ENCODE measurements at regions of chr6 and their contacts with region 1.

Region 1: DNA sequence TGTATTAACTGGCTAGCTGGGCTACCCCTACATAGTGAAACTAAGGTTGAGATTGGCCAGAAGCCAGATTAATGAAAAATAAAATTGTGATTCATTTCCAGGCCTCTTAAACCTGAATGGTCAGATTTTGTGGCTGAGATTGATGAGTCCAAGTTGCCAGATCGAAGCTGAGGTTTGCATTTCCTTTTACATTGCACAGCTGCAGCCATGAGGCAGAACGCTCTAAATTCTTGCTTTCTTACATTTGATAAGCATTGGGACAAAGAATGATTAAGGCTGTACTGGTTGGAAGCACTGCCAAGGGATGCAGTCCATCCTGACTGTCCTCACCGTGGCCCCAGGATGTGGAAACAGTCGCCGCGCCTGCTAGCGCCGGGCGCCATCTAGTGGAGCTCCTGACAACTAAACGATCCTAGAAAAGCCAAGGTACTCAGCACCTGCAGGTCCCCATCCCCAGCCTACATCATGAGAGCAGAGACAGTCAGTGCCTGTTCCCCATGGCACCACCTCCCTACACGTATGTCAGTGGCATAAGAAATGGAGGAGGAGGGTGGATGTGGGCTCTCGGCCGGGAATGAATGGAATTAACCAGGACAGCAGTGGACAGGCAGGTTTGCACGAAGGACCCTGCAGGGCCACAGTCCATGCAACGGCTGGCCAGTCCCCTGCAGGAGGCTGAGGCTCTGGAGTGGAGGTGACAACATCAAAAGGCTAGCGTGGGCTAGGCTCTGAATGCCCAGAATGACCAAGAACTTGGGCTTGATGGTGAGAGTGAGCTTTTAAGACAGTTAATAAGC is 19.0 kb downstream of the PXDC1 start:
- DNase-seq: peak; percentile 89
- H3K4me3 ChIP-seq: no peak overlapping the region
- H3K27ac ChIP-seq: no peak overlapping the region
- H3K4me1 ChIP-seq: peaks cover 0 to 34% (median 22%) of the 10 kb centered on the region in 4 donors
- H3K27me3 ChIP-seq: no peaks in the 10 kb centered on the region
- CTCF ChIP-seq: peak; percentile 83 to 89 (median 86)
- EP300 ChIP-seq: no peak
- POLR2A ChIP-seq: no peak

Region 2: DNA sequence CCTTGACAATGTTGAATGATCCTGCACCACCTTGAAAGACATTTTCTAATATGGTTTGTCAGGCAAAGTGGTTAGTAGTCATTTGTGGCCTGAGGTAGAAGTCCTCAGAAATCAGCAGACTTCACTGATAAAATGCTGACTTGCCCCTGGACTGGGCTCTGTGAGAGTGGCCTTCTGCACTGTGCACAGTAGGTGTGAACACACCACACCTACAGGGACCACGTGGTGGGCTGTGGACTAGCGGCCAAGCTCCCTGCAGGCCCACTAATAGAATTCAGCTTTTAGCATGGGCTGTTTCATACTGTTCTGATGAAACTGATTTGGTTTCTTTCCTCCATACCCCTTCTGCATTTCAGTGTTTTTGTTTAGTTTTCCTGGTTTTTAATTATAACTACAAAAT is 606.7 kb before region 1 on chr6:
- intact Hi-C with region 1: loop called (anchors 10 kb)
- DNase-seq: no peak
- H3K4me3 ChIP-seq: no peak overlapping the region
- H3K27ac ChIP-seq: no peak overlapping the region
- H3K4me1 ChIP-seq: no peaks in the 10 kb centered on the region
- H3K27me3 ChIP-seq: no peaks in the 10 kb centered on the region
- CTCF ChIP-seq: no peak
- EP300 ChIP-seq: no peak
- POLR2A ChIP-seq: no peak

Region 3: DNA sequence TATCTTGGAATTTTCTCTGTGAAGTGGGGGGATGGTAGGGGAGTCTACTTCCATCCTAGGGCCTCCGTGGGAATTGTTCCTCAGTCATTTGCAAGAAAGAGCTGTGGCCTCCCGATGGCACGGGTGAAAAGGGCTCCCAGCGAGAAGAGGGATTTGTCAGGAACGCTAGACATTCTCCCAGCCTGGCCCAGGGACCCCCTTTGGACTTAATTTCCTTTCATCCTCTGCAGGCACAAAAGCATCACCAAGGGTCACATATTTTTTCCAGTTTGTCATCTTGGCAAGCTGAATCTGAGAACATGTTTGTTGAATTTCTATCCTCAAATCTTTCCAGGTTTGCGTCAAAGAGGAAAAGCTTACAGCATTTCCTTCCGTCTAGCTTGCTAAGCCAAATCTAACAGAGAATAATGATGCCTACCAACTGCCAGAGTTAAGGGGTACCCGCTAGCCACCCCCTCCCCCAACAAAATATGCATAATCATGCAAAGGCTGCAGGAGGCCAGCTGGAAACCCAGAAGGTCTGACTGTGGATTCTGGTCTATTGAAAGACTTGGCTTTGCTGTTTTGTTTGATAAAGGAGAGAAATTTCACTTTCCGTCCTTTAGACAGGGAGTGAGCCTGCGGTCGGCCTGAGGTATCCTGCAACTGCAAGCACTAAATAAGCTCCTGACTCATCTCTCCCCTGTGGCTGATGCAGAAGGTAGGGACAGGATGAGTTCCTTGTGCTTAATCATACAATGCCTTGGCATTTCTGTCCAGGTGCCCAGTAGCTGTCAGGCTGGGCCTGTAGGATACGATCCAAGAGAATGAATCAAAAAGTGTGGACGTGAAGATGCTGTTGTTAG is 450.7 kb before region 1 on chr6:
- intact Hi-C with region 1: loop called (anchors 1 kb)
- DNase-seq: peak; percentile 66
- H3K4me3 ChIP-seq: no peak overlapping the region
- H3K27ac ChIP-seq: peak overlapping the region; percentile 38 to 75 (median 71)
- H3K4me1 ChIP-seq: peaks cover 0 to 55% (median 40%) of the 10 kb centered on the region in 4 donors
- H3K27me3 ChIP-seq: no peaks in the 10 kb centered on the region
- CTCF ChIP-seq: no peak
- EP300 ChIP-seq: no peak
- POLR2A ChIP-seq: no peak

Region 4: DNA sequence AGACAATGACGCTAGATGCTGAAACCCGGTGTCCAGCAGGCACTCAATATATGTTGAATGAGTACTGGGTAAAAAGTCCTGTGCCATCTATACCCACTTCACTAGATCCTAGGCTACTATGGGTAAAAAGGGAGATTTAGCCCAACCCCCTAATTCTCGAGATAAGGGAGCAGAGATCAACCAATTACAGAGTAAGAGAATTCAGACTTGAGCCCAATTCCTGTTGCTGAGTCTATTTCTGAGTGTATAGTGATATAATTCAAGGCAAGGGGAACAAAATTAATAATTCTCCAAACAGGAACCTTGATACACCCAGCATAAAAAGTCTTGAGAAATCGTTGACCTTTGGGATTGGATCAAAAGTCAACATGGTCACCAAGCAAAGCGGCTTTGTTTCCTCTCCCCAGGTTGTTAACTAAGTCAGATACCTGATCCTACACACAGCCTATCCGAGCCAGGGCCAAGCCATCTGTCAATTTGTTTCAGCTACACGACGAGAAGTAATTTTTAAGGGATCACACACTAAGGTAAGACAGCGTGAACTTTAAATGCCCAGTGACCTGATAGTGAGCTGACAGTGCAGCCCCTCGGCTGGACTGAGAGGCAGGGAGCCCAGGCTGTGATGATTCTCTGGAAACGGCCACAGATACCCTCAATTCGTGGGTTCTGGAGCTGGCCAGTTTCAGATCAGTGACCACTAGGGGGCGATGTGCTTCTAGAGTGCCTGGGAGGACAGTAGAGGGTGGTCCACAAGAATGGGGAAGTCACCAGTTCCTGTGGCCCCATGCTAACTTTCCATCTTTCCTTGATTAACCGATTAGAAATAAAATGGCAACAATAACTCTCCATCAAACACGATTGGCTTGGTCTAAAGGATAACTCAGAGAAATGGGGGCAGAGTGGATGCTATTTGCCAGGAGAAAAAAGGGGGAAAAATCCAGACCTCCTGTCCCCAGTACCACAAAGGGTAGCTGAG is 321.9 kb before region 1 on chr6:
- intact Hi-C with region 1: loop called (anchors 2 kb)
- DNase-seq: peak; percentile 68
- H3K4me3 ChIP-seq: no peak overlapping the region
- H3K27ac ChIP-seq: no peak overlapping the region
- H3K4me1 ChIP-seq: peaks cover 0 to 17% (median 13%) of the 10 kb centered on the region in 4 donors
- H3K27me3 ChIP-seq: no peaks in the 10 kb centered on the region
- CTCF ChIP-seq: peak; percentile 28 to 74 (median 64)
- EP300 ChIP-seq: no peak
- POLR2A ChIP-seq: no peak